CD4-positive, alpha-beta memory T cell (primary cell): ENCODE measurements at regions of chr13 and their contacts with region 1.

Region 1: DNA sequence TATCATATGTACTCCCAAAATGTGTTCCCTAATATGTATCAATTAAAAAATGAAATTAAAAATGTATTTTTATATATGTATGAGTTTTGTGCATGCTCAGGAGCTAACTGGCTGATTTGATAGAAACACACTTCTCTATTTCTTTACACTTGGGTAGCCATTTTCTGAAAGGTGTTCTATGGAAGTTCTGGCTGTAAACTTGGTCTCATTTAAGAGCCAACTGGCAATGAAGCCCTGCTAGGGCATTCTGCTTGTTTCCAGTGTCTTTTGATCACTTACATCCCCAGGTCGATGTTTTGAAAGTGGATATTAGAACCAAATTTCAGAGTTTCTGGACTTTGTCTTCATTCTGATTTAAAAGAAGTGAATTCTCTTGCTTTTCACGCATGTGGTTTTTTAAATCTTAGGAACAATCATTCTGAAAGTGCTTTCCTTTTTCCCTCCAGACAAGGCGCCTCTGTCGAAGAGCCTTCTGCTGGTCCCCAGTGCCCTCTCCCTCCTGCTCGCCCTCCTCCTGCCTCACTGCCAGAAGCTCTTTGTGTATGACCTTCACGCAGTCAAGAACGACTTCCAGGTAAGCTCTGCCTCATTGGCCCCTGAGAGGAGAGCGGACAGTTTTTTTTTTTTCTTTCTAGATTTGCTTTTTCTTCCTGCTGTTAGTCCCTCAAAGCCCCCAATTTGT is 20.1 kb downstream of the GPR18 start:
- DNase-seq: peak in 3 of 5 donors; percentile 38 to 59 (median 42)
- H3K4me3 ChIP-seq: peak overlapping the region in 1 of 2 donors; percentile 55
- H3K4me3 Mint-ChIP-seq: peak overlapping the region; percentile 86 to 92 (median 88)
- H3K27ac ChIP-seq: peak overlapping the region; percentile 63
- H3K27ac Mint-ChIP-seq: peak overlapping the region; percentile 84 to 99 (median 97)
- H3K4me1 ChIP-seq: peaks cover 62% of the 10 kb centered on the region
- H3K4me1 Mint-ChIP-seq: peaks cover 39 to 71% (median 56%) of the 10 kb centered on the region in 4 donors
- H3K27me3 ChIP-seq: no peaks in the 10 kb centered on the region
- H3K27me3 Mint-ChIP-seq: no peaks in the 10 kb centered on the region

Region 2: DNA sequence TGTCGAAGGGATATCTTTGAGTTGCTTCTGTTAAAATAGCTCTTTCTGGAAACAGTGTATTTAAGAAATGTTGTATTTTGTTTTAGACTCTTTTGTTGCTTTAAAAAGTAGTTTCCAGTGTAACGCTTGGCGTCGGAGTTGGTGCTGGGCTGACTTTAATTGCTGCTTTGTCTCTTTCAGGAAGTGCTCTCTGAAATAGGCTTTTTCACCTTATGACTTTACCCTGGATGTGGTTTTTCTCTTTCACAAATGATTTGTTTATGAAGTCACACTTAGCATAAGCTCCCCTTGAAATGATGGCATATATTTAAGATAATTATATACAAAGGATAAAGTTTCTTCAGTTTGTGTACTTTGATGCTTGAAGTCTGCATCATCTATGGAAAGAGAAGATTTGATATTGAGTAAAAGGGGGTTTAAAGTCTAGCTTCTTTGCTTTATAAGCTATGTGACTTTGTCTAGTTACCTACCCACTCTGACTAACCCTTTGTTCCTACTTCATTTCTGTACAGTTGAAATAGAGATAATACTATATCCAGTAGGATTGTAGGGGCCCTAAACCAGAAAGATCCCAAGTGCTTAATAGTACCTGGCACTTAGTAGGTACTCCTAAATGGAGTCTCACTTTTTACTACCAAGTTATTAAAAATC is 20.2 kb after region 1 on chr13 and contains the start of gene GPR18:
- CTCF ChIA-PET with region 1: interaction called, 18 read pairs
- POLR2A ChIA-PET with region 1: interaction called, 14 read pairs
- intact Hi-C with region 1: loop called (anchors 2 kb)
- DNase-seq: peak; percentile 50 to 69 (median 62)
- H3K4me3 ChIP-seq: peak within 1 kb of the TSS; percentile 52 to 67
- H3K4me3 Mint-ChIP-seq: peak within 1 kb of the TSS; percentile 89 to 98 (median 94)
- H3K27ac ChIP-seq: peak within 1 kb of the TSS; percentile 60
- H3K27ac Mint-ChIP-seq: peak within 1 kb of the TSS; percentile 84 to 96 (median 94)
- H3K4me1 ChIP-seq: peaks cover 55% of the 10 kb centered on the region
- H3K4me1 Mint-ChIP-seq: peaks cover 47 to 85% (median 59%) of the 10 kb centered on the region in 4 donors
- H3K27me3 ChIP-seq: no peaks in the 10 kb centered on the region
- H3K27me3 Mint-ChIP-seq: no peaks in the 10 kb centered on the region
- total RNA-seq, gene GPR18: 21.5 to 22.8 TPM

Region 3: DNA sequence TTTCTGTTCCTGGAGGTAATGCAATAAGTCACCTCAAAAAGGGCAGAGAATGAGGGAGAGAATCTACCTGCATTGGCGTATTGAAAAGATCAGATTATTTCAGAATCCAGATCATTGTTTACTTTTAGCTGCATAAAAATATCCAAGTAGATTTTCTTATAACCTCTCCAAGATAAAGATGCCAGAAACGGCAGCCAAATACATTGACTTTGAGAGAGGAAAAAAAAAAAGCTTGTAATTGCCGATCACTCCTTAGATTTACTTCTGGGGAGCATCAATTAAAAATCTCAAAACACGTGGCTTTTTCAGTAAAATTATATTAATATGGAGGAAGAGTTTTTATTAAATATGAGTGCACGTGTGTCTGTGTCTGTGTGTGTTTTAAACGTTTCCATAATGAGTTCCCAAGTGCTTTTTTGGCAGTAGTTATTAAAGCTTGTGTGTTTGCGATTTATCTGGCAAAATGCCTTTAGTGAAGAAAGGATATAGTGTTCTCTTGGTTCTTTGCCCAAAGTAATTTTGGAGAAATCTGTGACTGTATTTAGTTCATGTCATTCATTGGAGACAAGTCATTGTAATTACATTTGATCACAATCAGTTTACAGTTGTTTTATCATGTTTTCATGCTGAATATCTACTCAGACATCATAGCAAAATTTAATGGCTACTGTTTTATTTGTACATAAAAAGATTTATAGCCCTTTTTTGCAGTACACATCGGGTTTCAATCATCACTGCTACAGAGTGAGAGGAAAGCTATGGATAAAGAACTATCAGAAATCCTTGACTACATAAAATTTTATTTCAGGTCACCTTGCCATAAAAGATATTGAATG is 439.2 kb after region 1 on chr13:
- CTCF ChIA-PET with region 1: no interaction called
- POLR2A ChIA-PET with region 1: no interaction called
- intact Hi-C with region 1: no loop called
- DNase-seq: no peak
- H3K4me3 ChIP-seq: no peak overlapping the region
- H3K4me3 Mint-ChIP-seq: no peak overlapping the region
- H3K27ac ChIP-seq: no peak overlapping the region
- H3K27ac Mint-ChIP-seq: no peak overlapping the region
- H3K4me1 ChIP-seq: no peaks in the 10 kb centered on the region
- H3K4me1 Mint-ChIP-seq: peaks cover 0 to 3% (median 0%) of the 10 kb centered on the region in 4 donors
- H3K27me3 ChIP-seq: no peaks in the 10 kb centered on the region
- H3K27me3 Mint-ChIP-seq: no peaks in the 10 kb centered on the region